ENCODE measurements at regions of chr10 and their contacts with region 1.

Region 1: DNA sequence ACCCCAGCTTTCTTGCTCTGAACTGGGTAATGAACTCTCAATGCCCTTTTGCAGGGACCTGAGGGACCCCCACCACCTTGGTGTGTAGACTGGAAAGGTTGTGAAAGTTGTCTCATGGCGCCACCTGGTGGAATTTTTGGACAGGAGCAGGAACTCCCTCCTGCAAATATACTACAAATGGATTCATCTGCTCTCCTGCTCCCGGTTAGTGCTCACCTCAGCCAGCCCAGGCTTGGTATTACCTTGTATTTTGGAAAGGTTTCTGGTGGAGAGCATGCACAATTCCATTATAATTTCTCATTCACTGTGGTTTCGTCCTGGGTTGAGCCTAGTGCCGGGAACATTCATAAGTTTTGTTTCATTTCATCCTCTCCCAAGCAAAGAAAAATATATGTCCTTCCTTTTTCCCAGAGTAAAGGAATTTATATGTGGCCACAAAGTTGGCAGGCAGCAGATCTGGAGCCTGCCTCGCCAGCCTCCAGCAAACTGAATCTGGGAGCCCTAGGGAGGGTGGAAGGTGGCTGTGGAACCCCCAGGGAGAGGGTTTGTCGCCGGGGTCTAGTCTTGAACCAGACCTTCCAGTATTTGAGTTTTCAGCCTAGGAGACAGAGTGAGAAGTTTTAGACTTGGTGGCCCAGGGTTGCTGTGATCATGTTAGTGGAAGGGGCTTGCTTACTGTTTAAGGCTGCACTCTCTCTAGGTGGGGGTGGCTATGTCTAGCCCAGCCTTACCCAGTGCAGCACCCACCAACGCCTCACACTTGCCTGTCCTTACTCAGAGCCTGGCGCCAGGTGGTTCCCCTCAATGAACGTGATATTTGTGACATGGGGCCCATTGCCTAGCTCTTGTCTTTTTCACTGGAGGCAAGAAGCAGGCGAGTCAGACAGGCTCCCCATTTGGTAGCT is 9.5 kb downstream of the FAM241B start:
- DNase-seq: peak in 4 of 6 donors; percentile 47 to 71 (median 60)
- ATAC-seq: peak; percentile 60 to 85 (median 82)
- H3K4me3 ChIP-seq: no peak overlapping the region
- H3K27ac ChIP-seq: no peak overlapping the region
- H3K4me1 ChIP-seq: no peaks in the 10 kb centered on the region
- H3K27me3 ChIP-seq: no peaks in the 10 kb centered on the region
- CTCF ChIP-seq: peak; percentile 74 to 89 (median 80)

Region 2: GRCh38 chr10:69348816-69349541 is 290.6 kb before region 1 on chr10:
- intact Hi-C with region 1: no loop called
- DNase-seq: no peak
- ATAC-seq: peak in 3 of 4 donors; percentile 49 to 67 (median 65)
- H3K4me3 ChIP-seq: no peak overlapping the region
- H3K27ac ChIP-seq: peak overlapping the region in 2 of 4 donors; percentile 46 to 48
- H3K4me1 ChIP-seq: peaks cover 0 to 11% (median 0%) of the 10 kb centered on the region in 3 donors
- H3K27me3 ChIP-seq: no peaks in the 10 kb centered on the region
- CTCF ChIP-seq: no peak

Region 3: DNA sequence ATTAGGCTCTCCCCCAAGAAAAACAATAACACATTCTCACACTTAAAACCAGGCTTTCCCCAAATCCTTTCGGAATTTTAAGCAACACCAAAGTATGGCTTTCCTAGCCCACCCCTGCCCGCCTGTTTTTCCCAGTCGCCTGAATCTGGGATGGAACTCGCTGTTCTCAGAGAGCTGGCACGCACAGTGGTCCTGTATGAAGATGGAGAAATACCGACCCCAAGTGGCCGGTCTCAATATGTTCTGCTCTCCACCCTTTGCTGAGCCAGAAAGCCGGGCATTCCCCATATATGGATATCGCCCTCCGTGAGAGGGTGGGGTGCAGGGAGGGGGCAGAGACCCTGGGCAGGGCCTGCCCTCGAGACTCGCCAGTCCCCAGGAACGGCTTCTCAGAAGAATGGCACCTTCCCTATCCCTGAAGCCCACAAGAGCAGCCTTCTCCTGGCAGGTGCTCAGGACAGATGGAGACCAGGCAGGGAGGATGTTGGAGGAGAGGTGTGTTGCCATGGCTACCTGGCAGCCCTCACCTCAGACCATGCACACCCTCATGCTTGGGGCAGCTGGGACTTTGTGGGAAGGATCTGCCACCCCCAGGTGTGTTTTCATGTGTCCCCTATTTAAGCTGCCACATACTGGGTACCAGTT is 226.2 kb before region 1 on chr10:
- intact Hi-C with region 1: loop called in 2 of 3 experiments (anchors 5 to 10 kb)
- DNase-seq: peak in 2 of 6 donors; percentile 35 to 40
- ATAC-seq: peak in 2 of 4 donors; percentile 18 to 19
- H3K4me3 ChIP-seq: no peak overlapping the region
- H3K27ac ChIP-seq: no peak overlapping the region
- H3K4me1 ChIP-seq: peaks cover 0 to 4% (median 4%) of the 10 kb centered on the region in 3 donors
- H3K27me3 ChIP-seq: no peaks in the 10 kb centered on the region
- CTCF ChIP-seq: peak in 2 of 4 donors; percentile 7 to 13

Region 4: DNA sequence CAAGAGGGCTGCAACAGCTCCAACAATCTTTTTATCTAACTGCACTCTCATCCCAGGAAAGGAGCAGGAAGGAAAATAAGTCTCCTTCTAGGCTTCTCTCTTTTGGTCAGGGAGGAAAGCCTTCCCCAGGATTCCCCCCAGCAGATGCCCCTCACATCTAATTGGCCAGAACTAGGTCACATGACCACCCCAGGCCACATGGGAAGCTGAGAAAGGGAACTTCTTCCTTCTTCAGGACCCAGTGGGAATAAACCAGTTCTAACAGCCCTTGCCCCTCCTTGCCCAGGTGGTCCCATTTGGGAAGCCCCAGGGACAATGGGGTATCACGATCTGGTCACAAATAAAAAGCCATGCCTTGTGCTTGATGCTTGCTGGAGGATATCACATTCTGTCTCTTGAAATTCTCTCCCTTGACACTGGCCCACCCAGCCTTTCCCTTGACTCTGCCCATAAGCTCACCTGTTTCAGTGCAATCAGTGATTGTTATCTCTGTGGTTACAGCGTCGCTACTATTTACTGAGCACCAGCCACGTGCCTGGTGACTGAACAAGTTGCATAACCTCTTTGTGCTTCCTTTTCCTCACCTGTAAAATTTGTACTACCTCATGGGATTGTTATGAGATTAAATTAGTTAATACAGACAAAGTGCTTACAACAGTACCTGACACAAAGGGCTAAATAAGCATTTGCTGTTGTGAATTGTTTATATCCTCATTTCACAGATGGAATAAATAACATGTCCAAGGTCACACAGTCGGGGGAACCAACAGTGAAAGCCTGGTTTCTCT is 213.8 kb before region 1 on chr10:
- intact Hi-C with region 1: loop called in 1 of 3 experiments (anchors 10 kb)
- DNase-seq: no peak
- ATAC-seq: peak; percentile 60 to 78 (median 76)
- H3K4me3 ChIP-seq: no peak overlapping the region
- H3K27ac ChIP-seq: peak overlapping the region in 2 of 4 donors; percentile 53
- H3K4me1 ChIP-seq: peaks cover 0 to 6% (median 4%) of the 10 kb centered on the region in 3 donors
- H3K27me3 ChIP-seq: no peaks in the 10 kb centered on the region
- CTCF ChIP-seq: no peak

Region 5: GRCh38 chr10:69515699-69516259 is 123.8 kb before region 1 on chr10:
- intact Hi-C with region 1: loop called in 2 of 3 experiments (anchors 2 kb)
- DNase-seq: peak; percentile 52 to 88 (median 78)
- ATAC-seq: peak; percentile 90 to 98 (median 96)
- H3K4me3 ChIP-seq: no peak overlapping the region
- H3K27ac ChIP-seq: no peak overlapping the region
- H3K4me1 ChIP-seq: no peaks in the 10 kb centered on the region
- H3K27me3 ChIP-seq: no peaks in the 10 kb centered on the region
- CTCF ChIP-seq: peak; percentile 46 to 82 (median 70)

Region 6: GRCh38 chr10:69684020-69684980 is 44.8 kb after region 1 on chr10:
- intact Hi-C with region 1: no loop called
- DNase-seq: peak; percentile 58 to 82 (median 71)
- ATAC-seq: peak; percentile 53 to 75 (median 64)
- H3K4me3 ChIP-seq: no peak overlapping the region
- H3K27ac ChIP-seq: peak overlapping the region; percentile 71 to 86 (median 76)
- H3K4me1 ChIP-seq: peaks cover 17 to 37% (median 34%) of the 10 kb centered on the region in 3 donors
- H3K27me3 ChIP-seq: no peaks in the 10 kb centered on the region
- CTCF ChIP-seq: no peak

Region 7: DNA sequence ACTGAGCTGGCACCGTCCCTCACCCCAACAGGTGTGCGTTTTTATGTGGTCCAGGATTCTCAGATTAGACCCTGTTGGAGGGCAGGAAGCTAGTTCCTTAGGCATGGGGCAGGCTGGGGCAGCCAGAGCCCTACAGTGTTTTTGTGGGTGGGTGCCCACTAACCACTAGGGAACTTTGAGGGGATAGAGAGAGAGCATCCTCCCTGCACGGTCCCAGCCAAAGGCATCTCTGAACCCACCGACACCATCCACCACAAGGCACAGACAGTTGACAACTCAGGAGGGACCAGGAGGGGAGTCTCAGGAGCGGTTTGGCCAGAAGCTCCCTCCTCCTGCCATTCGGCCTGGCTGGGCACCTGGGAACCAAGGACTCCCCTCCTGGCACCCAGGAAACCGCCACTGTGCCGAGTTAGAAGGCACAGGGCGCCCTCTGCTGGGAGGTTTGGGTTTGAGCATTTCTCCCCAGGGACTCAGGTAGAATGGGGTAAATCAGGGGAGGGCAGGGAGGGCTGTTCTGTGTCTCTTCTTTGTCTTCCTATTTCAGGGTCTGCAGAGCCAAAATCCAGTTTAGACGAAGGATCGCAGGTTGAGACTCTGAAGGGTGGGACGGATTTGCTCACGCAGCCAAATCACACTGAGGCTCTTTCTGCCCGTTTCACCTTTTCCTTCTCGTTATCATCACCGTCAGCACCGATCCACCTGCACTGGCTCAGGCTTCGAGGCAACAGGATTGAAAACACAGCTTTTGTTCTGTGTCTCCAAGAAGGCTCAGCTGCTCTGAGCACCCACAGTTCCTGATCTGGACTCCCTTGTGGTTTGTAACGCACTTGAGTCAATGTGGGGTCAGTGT is 77.4 kb after region 1 on chr10:
- intact Hi-C with region 1: loop called (anchors 2 to 10 kb)
- DNase-seq: peak; percentile 41 to 89 (median 76)
- ATAC-seq: peak; percentile 75 to 96 (median 90)
- H3K4me3 ChIP-seq: no peak overlapping the region
- H3K27ac ChIP-seq: no peak overlapping the region
- H3K4me1 ChIP-seq: no peaks in the 10 kb centered on the region
- H3K27me3 ChIP-seq: no peaks in the 10 kb centered on the region
- CTCF ChIP-seq: peak; percentile 58 to 74 (median 66)